ENCODE measurements at regions of chr18 and their contacts with region 1.

Region 1: DNA sequence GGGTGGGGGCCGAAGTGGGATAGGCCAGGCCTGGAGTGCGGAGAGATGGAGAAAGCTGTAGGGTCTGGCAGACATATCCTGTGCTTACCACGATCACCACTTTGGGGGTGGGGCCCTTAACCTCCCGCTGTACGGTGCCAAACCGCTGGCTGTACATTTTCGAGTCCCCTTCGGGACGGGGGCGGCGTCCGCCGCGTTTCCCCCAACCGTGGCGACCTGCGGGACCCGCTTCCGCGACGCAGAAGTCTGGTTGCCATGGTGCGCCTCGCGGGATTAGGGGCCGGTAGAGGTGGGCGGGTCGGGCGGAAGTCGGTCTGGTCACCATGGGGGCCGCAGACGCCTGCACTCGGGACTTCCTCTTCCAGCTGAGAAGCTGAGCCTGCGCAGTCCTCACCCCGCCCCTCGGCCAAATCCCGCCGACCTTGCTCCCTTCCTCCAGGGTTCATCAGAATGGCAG is at the start of gene CFAP53:
- DNase-seq: peak; percentile 57
- ATAC-seq: peak; percentile 90
- H3K4me3 ChIP-seq: peak within 1 kb of the TSS; percentile 63
- H3K27ac ChIP-seq: peak within 1 kb of the TSS; percentile 83
- H3K4me1 ChIP-seq: peaks cover 22% of the 10 kb centered on the region
- H3K27me3 ChIP-seq: no peaks in the 10 kb centered on the region; a peak in 1 of 4 replicates
- CTCF ChIP-seq: no peak
- EP300 ChIP-seq: no peak
- POLR2A ChIP-seq: peak; percentile 64
- RAD21 ChIP-seq: no peak
- polyA plus RNA-seq, gene CFAP53: 0.05 to 0.06 TPM

Region 2: GRCh38 chr18:49486953-49487710 is 779.1 kb before region 1 on chr18 and contains the start of gene C18orf32:
- CTCF ChIA-PET with region 1: no interaction called
- POLR2A ChIA-PET with region 1: no interaction called
- RAD21 ChIA-PET with region 1: no interaction called
- SMC1A ChIA-PET with region 1: no interaction called
- in situ Hi-C with region 1: loop called (anchors 10 kb)
- intact Hi-C with region 1: no loop called
- DNase-seq: peak; percentile 83
- ATAC-seq: peak; percentile 95
- H3K4me3 ChIP-seq: peak within 1 kb of the TSS; percentile 96
- H3K27ac ChIP-seq: peak within 1 kb of the TSS; percentile 72
- H3K4me1 ChIP-seq: peaks cover 9% of the 10 kb centered on the region
- H3K27me3 ChIP-seq: no peaks in the 10 kb centered on the region
- CTCF ChIP-seq: no peak
- EP300 ChIP-seq: no peak
- POLR2A ChIP-seq: peak; percentile 98
- RAD21 ChIP-seq: no peak
- polyA plus RNA-seq, gene C18orf32: 35.7 to 44.0 TPM

Region 3: GRCh38 chr18:50111265-50111792 is 154.9 kb before region 1 on chr18:
- CTCF ChIA-PET with region 1: no interaction called
- POLR2A ChIA-PET with region 1: no interaction called
- RAD21 ChIA-PET with region 1: no interaction called
- SMC1A ChIA-PET with region 1: no interaction called
- in situ Hi-C with region 1: no loop called
- intact Hi-C with region 1: loop called (anchors 5 kb)
- DNase-seq: no peak
- ATAC-seq: peak; percentile 52; the same call in 2 of the 3 replicates
- H3K4me3 ChIP-seq: no peak overlapping the region
- H3K27ac ChIP-seq: no peak overlapping the region
- H3K4me1 ChIP-seq: no peaks in the 10 kb centered on the region
- H3K27me3 ChIP-seq: peaks cover 0 to 12% of the 10 kb centered on the region in 2 experiments; a peak in 2 of 4 replicates
- CTCF ChIP-seq: peak; percentile 7 to 52 (median 21); a peak in 4 of 6 replicates
- EP300 ChIP-seq: no peak
- POLR2A ChIP-seq: no peak
- RAD21 ChIP-seq: peak; percentile 63

Region 4: GRCh38 chr18:50281295-50281971 is 15.2 kb after region 1 on chr18 and contains the start of gene MBD1:
- CTCF ChIA-PET with region 1: interaction called, 19 read pairs
- POLR2A ChIA-PET with region 1: interaction called, 24 read pairs
- RAD21 ChIA-PET with region 1: interaction called, 6 read pairs
- SMC1A ChIA-PET with region 1: interaction called, 18 read pairs
- in situ Hi-C with region 1: no loop called
- intact Hi-C with region 1: loop called (anchors 2 kb)
- DNase-seq: peak; percentile 96
- ATAC-seq: peak; percentile 96
- H3K4me3 ChIP-seq: peak within 1 kb of the TSS; percentile 99
- H3K27ac ChIP-seq: peak within 1 kb of the TSS; percentile 88
- H3K4me1 ChIP-seq: peaks cover 16% of the 10 kb centered on the region
- H3K27me3 ChIP-seq: no peaks in the 10 kb centered on the region
- CTCF ChIP-seq: peak in 2 of 3 experiments; percentile 17 to 26; a peak in 1 of 6 replicates
- EP300 ChIP-seq: no peak
- POLR2A ChIP-seq: no peak
- RAD21 ChIP-seq: no peak
- polyA plus RNA-seq, gene MBD1: 8.4 to 12.4 TPM

Region 5: GRCh38 chr18:50315100-50315871 is 49.0 kb after region 1 on chr18:
- CTCF ChIA-PET with region 1: interaction called, 6 read pairs
- POLR2A ChIA-PET with region 1: interaction called, 3 read pairs
- RAD21 ChIA-PET with region 1: interaction called, 6 read pairs
- SMC1A ChIA-PET with region 1: interaction called, 15 read pairs
- in situ Hi-C with region 1: no loop called
- intact Hi-C with region 1: loop called (anchors 5 kb)
- DNase-seq: peak; percentile 97
- ATAC-seq: peak; percentile 89
- H3K4me3 ChIP-seq: peak overlapping the region; percentile 22
- H3K27ac ChIP-seq: peak overlapping the region; percentile 95
- H3K4me1 ChIP-seq: peaks cover 72% of the 10 kb centered on the region
- H3K27me3 ChIP-seq: no peaks in the 10 kb centered on the region
- CTCF ChIP-seq: no peak
- EP300 ChIP-seq: peak in 1 of 2 experiments; percentile 73; a peak in 2 of 4 replicates
- POLR2A ChIP-seq: no peak
- RAD21 ChIP-seq: 0 out of 2 replicates have a peak, but pooled peaks have one; percentile 20